ENCODE measurements at regions of chr17 and their contacts with region 1.

Region 1: GRCh38 chr17:28902819-28903545 is at the start of gene DHRS13:
- DNase-seq: peak; percentile 99
- H3K4me3 ChIP-seq: peak within 1 kb of the TSS; percentile 71 to 75
- H3K27ac ChIP-seq: peak within 1 kb of the TSS; percentile 53 to 79
- H3K4me1 ChIP-seq: peaks cover 3 to 15% of the 10 kb centered on the region in 2 experiments; a peak in 2 of 4 replicates
- H3K27me3 ChIP-seq: no peaks in the 10 kb centered on the region
- CTCF ChIP-seq: peak; percentile 87
- EP300 ChIP-seq: no peak; a peak in 1 of 4 replicates
- RAD21 ChIP-seq: peak; percentile 55
- polyA plus RNA-seq, gene DHRS13: 7.4 and 7.6 TPM in 2 replicates

Region 2: DNA sequence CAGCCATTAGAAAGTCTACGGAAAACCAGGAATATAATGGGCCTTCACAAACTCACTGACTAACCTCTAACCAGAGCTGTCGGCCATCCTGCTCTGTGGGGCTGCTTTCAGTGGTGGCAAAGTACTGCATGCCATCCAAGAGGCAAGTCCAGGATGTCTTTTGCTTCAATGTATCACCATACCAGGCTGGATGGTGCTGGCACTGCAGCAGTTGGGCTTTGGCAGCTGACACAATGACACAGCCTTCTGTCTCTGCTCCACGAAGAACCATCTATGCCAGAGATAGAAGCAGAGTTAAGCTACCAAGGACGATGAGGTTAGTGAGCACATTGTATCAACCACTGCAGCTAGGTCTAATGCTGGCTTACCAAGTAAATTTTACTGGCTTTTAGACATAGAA is 279.3 kb before region 1 on chr17:
- CTCF ChIA-PET with region 1: no interaction called
- POLR2A ChIA-PET with region 1: no interaction called
- DNase-seq: no peak
- H3K4me3 ChIP-seq: no peak overlapping the region
- H3K27ac ChIP-seq: no peak overlapping the region
- H3K4me1 ChIP-seq: no peaks in the 10 kb centered on the region
- H3K27me3 ChIP-seq: no peaks in the 10 kb centered on the region
- CTCF ChIP-seq: no peak
- EP300 ChIP-seq: no peak
- RAD21 ChIP-seq: no peak

Region 3: GRCh38 chr17:28916302-28916934 is 13.4 kb after region 1 on chr17:
- CTCF ChIA-PET with region 1: interaction called, 32 read pairs
- POLR2A ChIA-PET with region 1: no interaction called
- DNase-seq: peak; percentile 49
- H3K4me3 ChIP-seq: peak overlapping the region in 1 of 2 experiments; percentile 33; a peak in 1 of 4 replicates
- H3K27ac ChIP-seq: no peak overlapping the region
- H3K4me1 ChIP-seq: no peaks in the 10 kb centered on the region
- H3K27me3 ChIP-seq: no peaks in the 10 kb centered on the region
- CTCF ChIP-seq: peak; percentile 71
- EP300 ChIP-seq: no peak
- RAD21 ChIP-seq: peak; percentile 62

Region 4: DNA sequence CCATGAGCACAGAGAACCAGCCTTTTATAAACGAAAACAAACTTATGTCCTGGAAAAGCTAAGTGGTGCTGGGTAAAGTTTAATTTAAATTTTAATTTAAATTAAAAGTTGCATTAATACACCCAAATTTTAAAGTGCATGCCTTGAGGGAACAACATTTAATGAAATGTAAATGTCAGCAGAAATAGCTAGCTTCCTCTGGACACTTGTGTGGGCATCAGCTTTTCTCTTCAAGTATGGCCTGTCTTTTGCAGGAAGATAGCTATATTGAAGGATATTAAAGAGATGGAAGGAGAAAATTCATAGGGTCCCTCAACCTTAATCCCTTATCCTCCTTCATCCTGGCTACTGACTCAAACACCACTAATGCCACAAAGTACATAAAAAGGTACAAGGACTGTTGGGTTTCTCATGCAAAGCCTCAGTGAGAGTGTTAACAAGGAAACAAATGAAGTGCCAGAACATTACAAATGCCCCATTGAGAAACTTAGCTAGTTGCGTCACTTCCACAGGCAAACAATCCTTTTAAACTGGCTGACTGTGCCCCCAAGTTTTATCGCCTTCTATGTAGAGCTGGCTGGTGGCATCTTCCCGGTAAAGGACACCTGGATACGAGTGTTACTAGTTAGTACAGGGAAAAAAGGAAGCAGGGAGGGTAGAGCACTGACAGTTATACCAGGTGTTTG is 34.2 kb after region 1 on chr17:
- CTCF ChIA-PET with region 1: interaction called, 17 read pairs
- POLR2A ChIA-PET with region 1: no interaction called
- DNase-seq: no peak
- H3K4me3 ChIP-seq: no peak overlapping the region
- H3K27ac ChIP-seq: no peak overlapping the region
- H3K4me1 ChIP-seq: peaks cover 0 to 26% of the 10 kb centered on the region in 2 experiments; a peak in 2 of 4 replicates
- H3K27me3 ChIP-seq: no peaks in the 10 kb centered on the region
- CTCF ChIP-seq: no peak
- EP300 ChIP-seq: no peak
- RAD21 ChIP-seq: no peak

Region 5: DNA sequence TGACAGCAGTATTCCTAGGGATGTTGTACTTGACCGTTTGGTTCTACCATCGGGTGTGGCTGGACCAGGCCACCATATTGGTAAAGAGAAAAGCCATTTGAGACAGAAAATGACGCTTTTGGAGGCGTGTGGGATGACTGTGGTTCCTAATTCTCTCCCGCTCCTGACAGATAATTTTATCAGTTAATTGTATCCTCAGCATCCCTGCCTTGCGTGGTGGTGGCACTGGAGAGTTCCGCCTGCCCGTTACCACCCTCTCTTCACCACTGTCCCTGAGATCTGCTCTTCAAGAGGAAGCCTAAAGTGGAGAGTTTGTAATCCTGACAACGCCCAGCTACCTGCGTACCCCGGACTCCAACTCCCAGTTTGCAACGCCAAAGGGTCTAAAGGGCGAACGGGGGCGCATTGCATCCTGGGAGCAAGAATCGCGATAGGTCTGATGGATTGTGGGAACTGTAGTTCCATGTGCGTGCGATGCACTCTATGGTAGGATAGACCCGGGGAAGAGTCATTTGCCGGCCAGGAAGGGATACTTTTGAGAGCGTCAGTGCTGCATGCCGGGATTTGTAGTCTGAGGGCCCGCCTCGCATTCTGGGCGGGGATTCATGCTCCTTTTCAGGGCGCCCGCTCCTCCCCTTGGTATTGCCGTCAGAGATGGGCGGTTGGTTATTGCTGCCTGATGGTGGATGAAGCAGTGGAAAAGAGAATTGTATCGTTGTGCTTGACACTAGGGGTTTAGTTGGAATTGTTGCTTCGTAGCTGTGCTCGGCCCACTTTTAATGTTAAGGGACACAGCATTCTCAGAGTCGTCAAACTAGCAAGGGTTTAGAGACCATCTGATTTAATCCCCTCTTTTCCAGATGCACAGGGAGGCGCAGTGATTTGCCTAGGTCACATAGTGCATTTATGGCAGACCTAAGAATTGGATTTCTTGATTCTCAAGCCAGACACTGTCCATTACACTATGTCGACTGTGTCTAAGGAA is 49.3 kb after region 1 on chr17:
- CTCF ChIA-PET with region 1: interaction called, 11 read pairs
- POLR2A ChIA-PET with region 1: interaction called, 6 read pairs
- DNase-seq: peak; percentile 88
- H3K4me3 ChIP-seq: peak overlapping the region; percentile 80 to 81
- H3K27ac ChIP-seq: peak overlapping the region; percentile 99 to 100
- H3K4me1 ChIP-seq: peaks cover 14 to 24% of the 10 kb centered on the region in 2 experiments
- H3K27me3 ChIP-seq: no peaks in the 10 kb centered on the region
- CTCF ChIP-seq: no peak
- EP300 ChIP-seq: no peak
- RAD21 ChIP-seq: no peak

Region 6: GRCh38 chr17:28985950-28986713 is 83.2 kb after region 1 on chr17:
- CTCF ChIA-PET with region 1: no interaction called
- POLR2A ChIA-PET with region 1: no interaction called
- DNase-seq: no peak
- H3K4me3 ChIP-seq: no peak overlapping the region
- H3K27ac ChIP-seq: no peak overlapping the region
- H3K4me1 ChIP-seq: peaks cover 12% of the 10 kb centered on the region in 2 experiments; a peak in 2 of 4 replicates
- H3K27me3 ChIP-seq: no peaks in the 10 kb centered on the region
- CTCF ChIP-seq: no peak
- EP300 ChIP-seq: no peak
- RAD21 ChIP-seq: no peak

Region 7: GRCh38 chr17:29059281-29059680 is 156.3 kb after region 1 on chr17:
- CTCF ChIA-PET with region 1: no interaction called
- POLR2A ChIA-PET with region 1: no interaction called
- DNase-seq: no peak
- H3K4me3 ChIP-seq: no peak overlapping the region
- H3K27ac ChIP-seq: no peak overlapping the region
- H3K4me1 ChIP-seq: peaks cover 7 to 45% of the 10 kb centered on the region in 2 experiments; a peak in 3 of 4 replicates
- H3K27me3 ChIP-seq: no peaks in the 10 kb centered on the region
- CTCF ChIP-seq: no peak
- EP300 ChIP-seq: no peak
- RAD21 ChIP-seq: no peak

Region 8: DNA sequence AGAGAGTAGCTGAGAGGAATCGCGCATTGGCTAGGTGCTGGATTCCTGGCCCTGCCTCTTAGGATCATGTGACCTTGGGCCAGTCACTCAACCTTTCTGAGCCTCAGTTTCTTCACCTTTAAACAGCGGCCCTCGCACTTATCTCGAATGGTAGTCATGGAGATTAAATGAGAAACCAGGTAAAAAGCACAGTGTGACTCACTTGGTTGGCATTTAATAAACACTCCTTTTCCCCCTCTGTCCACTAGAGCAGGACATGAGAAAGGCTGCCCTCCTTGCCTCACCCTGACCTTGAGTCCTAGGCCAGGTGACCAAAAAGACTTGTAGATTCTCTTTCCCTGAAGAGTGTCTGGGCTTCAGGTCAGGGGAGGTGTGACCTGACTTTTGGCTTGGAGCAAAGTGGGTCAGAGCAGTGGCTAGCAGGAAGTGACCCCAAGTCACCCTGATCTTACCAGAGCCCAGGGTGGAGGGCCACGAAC is 205.0 kb after region 1 on chr17:
- CTCF ChIA-PET with region 1: no interaction called
- POLR2A ChIA-PET with region 1: no interaction called
- DNase-seq: no peak
- H3K4me3 ChIP-seq: no peak overlapping the region
- H3K27ac ChIP-seq: peak overlapping the region in 1 of 2 experiments; percentile 89; a peak in 2 of 4 replicates
- H3K4me1 ChIP-seq: peaks cover 5 to 31% of the 10 kb centered on the region in 2 experiments; a peak in 2 of 4 replicates
- H3K27me3 ChIP-seq: no peaks in the 10 kb centered on the region
- CTCF ChIP-seq: no peak
- EP300 ChIP-seq: no peak
- RAD21 ChIP-seq: no peak

Measured in SK-N-SH (cell line).